ENCODE measurements at regions of chr2 and their contacts with region 1.

Region 1: GRCh38 chr2:30165050-30165520 is 18.3 kb downstream of the YPEL5 start:
- DNase-seq: peak; percentile 83
- H3K4me3 ChIP-seq: no peak overlapping the region
- H3K27ac ChIP-seq: no peak overlapping the region
- H3K27me3 ChIP-seq: no peaks in the 10 kb centered on the region
- CTCF ChIP-seq: peak; percentile 93

Region 2: GRCh38 chr2:30146438-30147147 is 18.5 kb before region 1 on chr2 and contains the start of gene YPEL5:
- CTCF ChIA-PET with region 1: interaction called, 82 read pairs
- POLR2A ChIA-PET with region 1: interaction called, 11 read pairs
- DNase-seq: peak; percentile 99
- H3K4me3 ChIP-seq: peak within 1 kb of the TSS; percentile 74
- H3K27ac ChIP-seq: peak within 1 kb of the TSS; percentile 80
- H3K27me3 ChIP-seq: peaks cover 7% of the 10 kb centered on the region
- CTCF ChIP-seq: no peak
- polyA plus RNA-seq, gene YPEL5: 112 and 116 TPM in 2 replicates

Region 3: DNA sequence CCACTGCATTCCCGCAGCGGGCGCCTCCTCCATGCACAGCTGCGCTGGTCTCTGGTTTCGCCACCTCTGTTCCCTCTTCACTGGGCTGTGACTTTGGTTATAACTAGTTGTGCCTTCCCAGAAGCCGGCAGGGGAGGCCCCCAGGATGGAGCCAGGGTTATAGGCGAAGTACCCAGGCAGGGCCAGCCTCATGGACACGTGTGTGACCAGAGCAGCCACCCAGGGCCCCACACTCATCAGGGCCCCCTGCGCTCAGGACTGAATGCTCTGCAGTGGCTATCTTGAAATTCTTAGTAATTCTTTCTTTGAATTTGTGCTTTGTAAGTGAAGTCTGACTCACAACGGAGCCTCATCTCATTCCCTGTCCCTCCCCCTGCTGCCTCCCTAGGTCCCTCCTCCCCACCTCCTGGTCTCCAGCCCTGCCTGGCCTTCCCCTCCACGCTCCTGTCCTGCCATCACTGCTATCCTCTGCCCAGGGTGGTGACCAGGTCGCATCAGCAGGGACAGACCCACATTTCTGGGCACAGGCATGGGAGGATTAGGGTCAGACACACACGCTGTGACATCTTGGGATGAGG is 28.1 kb after region 1 on chr2:
- CTCF ChIA-PET with region 1: interaction called, 11 read pairs
- POLR2A ChIA-PET with region 1: no interaction called
- DNase-seq: no peak
- H3K4me3 ChIP-seq: no peak overlapping the region
- H3K27ac ChIP-seq: no peak overlapping the region
- H3K27me3 ChIP-seq: peaks cover 8% of the 10 kb centered on the region
- CTCF ChIP-seq: no peak

Region 4: GRCh38 chr2:30217644-30218337 is 52.7 kb after region 1 on chr2:
- CTCF ChIA-PET with region 1: interaction called, 16 read pairs
- POLR2A ChIA-PET with region 1: no interaction called
- DNase-seq: no peak
- H3K4me3 ChIP-seq: no peak overlapping the region
- H3K27ac ChIP-seq: no peak overlapping the region
- H3K27me3 ChIP-seq: peaks cover 4% of the 10 kb centered on the region
- CTCF ChIP-seq: no peak

Region 5: DNA sequence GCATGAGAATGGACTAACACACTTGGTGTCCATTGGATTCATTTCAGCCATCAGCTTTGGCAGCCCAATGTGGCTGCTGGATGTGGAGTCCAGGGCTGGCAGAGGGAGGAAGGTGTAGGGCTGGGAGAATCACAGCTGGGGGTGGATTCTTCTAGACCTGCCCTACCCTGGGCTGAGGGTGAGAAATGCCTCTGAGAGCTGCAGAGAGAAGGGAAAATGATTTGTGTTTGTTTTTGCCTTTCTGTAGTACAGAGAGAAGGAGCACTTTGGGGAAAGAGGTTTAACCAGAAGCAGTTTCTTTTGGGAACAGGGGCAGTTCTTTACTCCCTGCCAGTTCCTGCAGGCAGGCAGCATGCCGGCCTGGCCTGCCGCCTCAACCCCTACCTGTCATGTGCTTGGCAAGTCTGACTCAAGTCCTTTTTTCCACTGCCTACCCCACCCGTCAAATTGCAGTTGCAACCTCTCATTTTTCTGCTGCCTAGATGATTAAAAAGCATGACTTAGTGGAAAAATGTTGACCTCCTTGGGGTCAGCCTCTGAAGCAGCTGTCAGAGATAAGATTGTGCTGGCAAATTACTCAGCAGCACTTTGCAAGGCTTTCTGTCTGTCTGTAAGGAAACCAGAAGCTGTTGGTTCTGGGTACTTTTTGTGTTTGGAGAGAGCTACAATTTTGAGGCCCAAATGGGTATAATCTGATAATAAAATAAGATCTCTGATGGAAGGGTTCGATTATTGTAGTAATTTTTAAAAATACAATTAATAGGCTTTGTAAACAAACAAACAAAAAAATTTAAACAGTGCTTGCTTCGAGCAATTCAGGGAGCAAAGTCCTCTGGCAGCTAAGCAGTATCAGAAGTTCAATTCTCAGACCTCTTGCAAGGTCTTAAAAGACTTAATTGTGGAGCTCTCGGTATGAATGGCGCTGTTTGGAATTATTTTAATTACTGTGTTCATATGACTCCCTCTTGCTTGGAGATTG is 87.9 kb after region 1 on chr2:
- CTCF ChIA-PET with region 1: interaction called, 15 read pairs
- POLR2A ChIA-PET with region 1: interaction called, 3 read pairs
- DNase-seq: peak; percentile 41
- H3K4me3 ChIP-seq: no peak overlapping the region
- H3K27ac ChIP-seq: peak overlapping the region; percentile 47
- H3K27me3 ChIP-seq: no peaks in the 10 kb centered on the region
- CTCF ChIP-seq: no peak

Region 6: DNA sequence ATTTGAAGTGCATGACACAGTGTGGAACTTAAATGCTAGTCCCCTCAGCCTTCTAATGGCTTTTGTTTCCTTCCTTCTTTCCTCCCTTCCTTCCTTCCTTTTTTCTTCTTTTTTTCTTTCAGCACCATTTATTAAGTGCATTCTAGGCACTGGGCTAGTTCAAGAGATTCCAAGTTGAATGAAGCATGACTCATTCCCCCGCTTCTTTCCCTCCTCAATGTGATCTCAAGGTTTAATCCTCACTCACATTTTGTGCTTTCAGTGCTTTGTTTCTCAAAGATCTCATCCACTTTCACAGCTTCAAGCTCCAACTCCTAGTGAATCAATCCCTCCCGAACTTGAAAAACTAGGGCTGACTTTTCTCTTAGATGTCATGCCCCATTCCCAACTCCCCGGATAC is 156.4 kb after region 1 on chr2:
- CTCF ChIA-PET with region 1: no interaction called
- POLR2A ChIA-PET with region 1: no interaction called
- DNase-seq: peak; percentile 10
- H3K4me3 ChIP-seq: no peak overlapping the region
- H3K27ac ChIP-seq: no peak overlapping the region
- H3K27me3 ChIP-seq: no peaks in the 10 kb centered on the region
- CTCF ChIP-seq: no peak

Region 7: GRCh38 chr2:30666307-30666874 is 501.3 kb after region 1 on chr2:
- CTCF ChIA-PET with region 1: interaction called, 10 read pairs
- POLR2A ChIA-PET with region 1: no interaction called
- DNase-seq: peak; percentile 96
- H3K4me3 ChIP-seq: no peak overlapping the region
- H3K27ac ChIP-seq: peak overlapping the region; percentile 100
- H3K27me3 ChIP-seq: no peaks in the 10 kb centered on the region
- CTCF ChIP-seq: no peak

Region 8: GRCh38 chr2:31170071-31170698 is 1005.1 kb after region 1 on chr2:
- CTCF ChIA-PET with region 1: interaction called, 13 read pairs
- POLR2A ChIA-PET with region 1: no interaction called
- DNase-seq: peak; percentile 15
- H3K4me3 ChIP-seq: no peak overlapping the region
- H3K27ac ChIP-seq: no peak overlapping the region
- H3K27me3 ChIP-seq: no peaks in the 10 kb centered on the region
- CTCF ChIP-seq: peak; percentile 93

Measured in AG04450 (cell line).